GM10248 (cell line): ENCODE measurements at regions of chr16 and their contacts with region 1.

Region 1: GRCh38 chr16:66872943-66873684 is 7.2 kb upstream of the PDP2 start:
- DNase-seq: peak; percentile 88
- CTCF ChIP-seq: peak; percentile 96

Region 2: GRCh38 chr16:66406534-66407221 is 466.4 kb before region 1 on chr16:
- CTCF ChIA-PET with region 1: interaction called, 26 read pairs
- POLR2A ChIA-PET with region 1: no interaction called
- DNase-seq: peak; percentile 89
- CTCF ChIP-seq: peak; percentile 88

Region 3: GRCh38 chr16:66660422-66661209 is 212.5 kb before region 1 on chr16:
- CTCF ChIA-PET with region 1: interaction called, 11 read pairs
- POLR2A ChIA-PET with region 1: no interaction called
- DNase-seq: no peak
- CTCF ChIP-seq: no peak

Region 4: GRCh38 chr16:66824006-66824405 is 49.1 kb before region 1 on chr16:
- CTCF ChIA-PET with region 1: interaction called, 80 read pairs
- POLR2A ChIA-PET with region 1: no interaction called
- DNase-seq: no peak
- CTCF ChIP-seq: no peak

Region 5: DNA sequence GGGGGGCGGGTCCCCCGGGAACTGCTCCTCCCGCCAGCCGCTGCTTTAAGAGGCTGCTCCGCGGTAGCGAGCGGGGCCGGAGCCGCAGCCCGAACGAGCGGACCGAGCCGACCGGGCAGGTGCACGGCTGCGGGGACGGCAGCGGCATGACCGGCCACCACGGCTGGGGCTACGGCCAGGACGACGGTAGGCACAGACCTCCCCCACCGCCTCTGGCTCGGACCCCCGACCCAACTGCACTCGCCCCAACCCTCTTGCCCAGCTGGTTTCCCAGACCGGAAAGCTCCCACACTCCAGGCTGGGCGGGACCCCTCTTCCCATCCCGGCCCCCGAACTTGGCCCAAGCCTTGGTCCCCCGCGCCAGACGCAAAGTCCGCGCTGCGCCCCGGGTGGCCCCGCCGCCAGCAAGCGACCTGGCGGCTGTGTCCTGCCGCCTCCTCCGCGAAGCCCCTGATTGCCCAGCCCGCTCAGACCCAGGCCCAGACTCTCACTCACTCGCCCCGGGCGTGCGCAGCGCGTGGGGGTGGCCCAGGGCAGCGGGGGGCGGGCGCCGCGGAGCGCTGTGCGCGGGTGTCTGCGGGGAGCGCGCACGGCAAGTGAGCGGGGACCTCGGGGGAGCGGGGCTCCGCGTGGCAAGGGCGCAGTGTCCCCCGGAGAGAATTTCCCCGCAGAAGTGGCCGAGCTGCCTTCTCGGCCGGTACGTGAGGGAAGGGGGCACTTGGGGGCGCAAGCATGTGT is 28.6 kb before region 1 on chr16 and contains the start of gene CA7:
- CTCF ChIA-PET with region 1: interaction called, 176 read pairs
- POLR2A ChIA-PET with region 1: no interaction called
- DNase-seq: no peak
- CTCF ChIP-seq: no peak

Region 6: DNA sequence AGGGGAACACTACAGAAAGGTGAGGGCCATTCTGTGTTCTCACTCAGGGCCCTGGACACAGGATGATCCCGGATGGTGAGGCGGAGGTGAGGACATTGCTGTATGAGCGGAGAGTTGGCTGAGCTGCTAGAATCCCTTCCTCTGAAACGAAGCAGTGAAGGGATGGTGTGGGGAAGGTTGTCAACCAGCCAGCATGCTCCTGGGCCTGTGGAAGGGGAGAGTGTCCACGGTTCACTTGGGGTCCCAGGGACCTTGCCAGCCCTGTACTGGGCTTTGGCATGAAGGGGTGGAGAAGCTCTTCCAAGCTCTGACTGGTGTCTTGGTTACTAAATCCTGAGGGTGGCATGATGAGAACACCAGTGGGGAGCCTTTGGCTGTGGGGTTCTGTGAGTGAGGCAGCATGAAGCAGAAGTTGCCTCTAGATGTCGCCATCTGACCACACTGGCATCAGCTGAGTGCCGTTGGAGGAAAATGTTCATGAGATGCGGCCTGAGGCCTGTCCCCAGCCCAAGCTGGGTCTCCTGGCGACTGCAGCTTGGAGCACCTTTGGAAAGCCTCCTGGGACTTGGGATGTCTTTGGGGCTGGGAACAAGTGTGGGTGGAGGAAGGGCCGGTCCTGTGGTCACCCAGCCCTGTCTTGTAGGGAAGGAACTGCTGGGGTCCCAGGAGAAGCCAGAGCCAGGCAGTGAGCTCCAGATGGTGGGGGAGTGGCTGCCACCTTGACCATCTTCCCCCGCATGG is 22.0 kb after region 1 on chr16:
- CTCF ChIA-PET with region 1: interaction called, 11 read pairs
- POLR2A ChIA-PET with region 1: no interaction called
- DNase-seq: peak; percentile 78
- CTCF ChIP-seq: peak; percentile 87

Region 7: GRCh38 chr16:67183627-67184328 is 310.7 kb after region 1 on chr16 and contains the start of gene MATCAP1:
- CTCF ChIA-PET with region 1: no interaction called
- POLR2A ChIA-PET with region 1: no interaction called
- DNase-seq: peak; percentile 99
- CTCF ChIP-seq: no peak